HepG2 (cell line): ENCODE measurements at regions of chr6 and their contacts with region 1.

Region 1: DNA sequence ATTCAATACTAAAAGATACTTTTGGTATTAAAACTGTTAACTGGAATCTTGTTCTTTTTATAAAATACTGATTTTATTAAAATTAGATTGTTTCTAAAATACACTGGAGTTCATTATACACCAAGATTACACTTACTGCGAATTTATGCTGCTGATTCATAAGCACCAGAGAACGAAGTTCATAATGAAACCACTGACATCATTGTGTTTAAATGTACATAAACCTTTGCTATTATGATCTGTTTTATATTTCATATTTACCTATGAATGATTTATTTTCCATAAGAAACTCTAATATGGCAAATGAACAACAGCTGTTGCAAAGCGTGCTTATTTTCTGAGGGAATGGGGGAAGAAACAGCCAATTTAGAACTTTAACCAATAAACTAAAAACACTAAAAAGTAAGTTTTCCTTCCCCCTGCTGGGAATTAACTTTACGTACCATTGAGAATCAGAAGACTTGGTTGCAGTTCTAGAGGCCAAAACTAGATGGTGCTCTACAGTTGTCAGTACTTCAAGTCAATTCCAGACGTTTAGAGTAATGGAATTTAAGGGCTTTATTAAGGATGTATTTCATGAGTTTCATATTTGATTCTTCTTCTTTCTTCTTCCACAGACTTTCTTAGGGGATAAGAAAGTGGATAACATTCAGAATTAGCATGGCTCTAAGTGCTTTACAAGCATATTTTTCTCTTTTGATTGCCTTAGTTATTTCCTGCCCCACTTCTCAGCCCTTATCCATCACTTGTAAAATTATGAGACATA is 30.8 kb upstream of the COL19A1 start:
- DNase-seq: peak; percentile 41
- ATAC-seq: peak; percentile 75
- H3K4me3 ChIP-seq: no peak overlapping the region
- H3K27ac ChIP-seq: no peak overlapping the region
- H3K4me1 ChIP-seq: no peaks in the 10 kb centered on the region
- H3K27me3 ChIP-seq: no peaks in the 10 kb centered on the region
- CTCF ChIP-seq: peak; percentile 60
- EP300 ChIP-seq: no peak
- POLR2A ChIP-seq: no peak
- RAD21 ChIP-seq: no peak

Region 2: DNA sequence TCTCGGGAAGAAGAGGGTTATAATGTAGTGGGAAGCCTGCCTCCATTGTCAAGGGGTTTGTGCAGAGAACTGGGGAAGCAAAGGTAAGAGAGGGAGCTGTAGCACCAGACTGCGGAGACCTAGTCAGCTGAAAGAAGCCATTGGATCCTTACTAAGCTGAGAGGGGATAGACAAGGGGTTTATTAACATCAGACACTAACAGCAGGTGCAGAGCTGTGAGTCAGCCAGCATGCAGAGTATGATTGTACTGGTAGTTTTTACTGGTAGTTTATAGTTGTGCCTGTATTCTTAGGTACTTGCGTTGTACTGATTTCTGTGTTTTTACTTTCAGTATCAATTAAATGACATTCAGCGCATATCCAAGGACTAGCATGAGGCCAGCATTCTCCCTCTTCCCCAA is 13.0 kb after region 1 on chr6:
- CTCF ChIA-PET with region 1: no interaction called
- POLR2A ChIA-PET with region 1: no interaction called
- in situ Hi-C with region 1: no loop called
- intact Hi-C with region 1: no loop called
- DNase-seq: no peak
- ATAC-seq: no peak
- H3K4me3 ChIP-seq: no peak overlapping the region
- H3K27ac ChIP-seq: no peak overlapping the region
- H3K4me1 ChIP-seq: no peaks in the 10 kb centered on the region
- H3K27me3 ChIP-seq: no peaks in the 10 kb centered on the region
- CTCF ChIP-seq: no peak
- EP300 ChIP-seq: no peak
- POLR2A ChIP-seq: no peak
- RAD21 ChIP-seq: no peak

Region 3: DNA sequence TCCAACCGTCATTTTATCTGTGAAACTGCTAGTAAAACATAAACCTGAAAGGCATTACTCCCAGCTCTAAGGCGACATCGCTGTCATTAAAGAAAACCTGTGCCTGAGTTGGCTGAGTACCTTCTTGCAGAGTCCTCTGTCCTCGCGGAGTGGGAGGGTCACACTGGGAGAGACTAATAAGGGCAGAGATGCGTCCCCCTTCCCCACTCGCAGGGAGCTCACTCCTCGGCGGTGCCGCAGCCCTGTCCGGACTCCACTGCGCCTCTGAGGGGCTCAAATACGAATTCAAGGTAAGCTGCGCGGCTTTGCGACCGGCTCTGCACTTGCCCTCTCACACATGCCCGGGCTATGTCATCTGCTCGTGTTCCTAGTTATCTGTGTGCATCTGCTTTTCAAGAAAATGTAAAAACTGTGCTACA is 30.8 kb after region 1 on chr6 and contains the start of gene COL19A1:
- CTCF ChIA-PET with region 1: no interaction called
- POLR2A ChIA-PET with region 1: no interaction called
- in situ Hi-C with region 1: no loop called
- intact Hi-C with region 1: no loop called
- DNase-seq: no peak
- ATAC-seq: peak; percentile 64
- H3K4me3 ChIP-seq: peak within 1 kb of the TSS; percentile 50 to 68 (median 50)
- H3K27ac ChIP-seq: no peak within 1 kb of the TSS
- H3K4me1 ChIP-seq: peaks cover 16% of the 10 kb centered on the region
- H3K27me3 ChIP-seq: peaks cover 2 to 34% of the 10 kb centered on the region in 2 experiments; a peak in 4 of 5 replicates
- CTCF ChIP-seq: no peak
- EP300 ChIP-seq: no peak
- POLR2A ChIP-seq: no peak
- RAD21 ChIP-seq: no peak
- total RNA-seq, gene COL19A1: not detected in 2 replicates

Region 4: DNA sequence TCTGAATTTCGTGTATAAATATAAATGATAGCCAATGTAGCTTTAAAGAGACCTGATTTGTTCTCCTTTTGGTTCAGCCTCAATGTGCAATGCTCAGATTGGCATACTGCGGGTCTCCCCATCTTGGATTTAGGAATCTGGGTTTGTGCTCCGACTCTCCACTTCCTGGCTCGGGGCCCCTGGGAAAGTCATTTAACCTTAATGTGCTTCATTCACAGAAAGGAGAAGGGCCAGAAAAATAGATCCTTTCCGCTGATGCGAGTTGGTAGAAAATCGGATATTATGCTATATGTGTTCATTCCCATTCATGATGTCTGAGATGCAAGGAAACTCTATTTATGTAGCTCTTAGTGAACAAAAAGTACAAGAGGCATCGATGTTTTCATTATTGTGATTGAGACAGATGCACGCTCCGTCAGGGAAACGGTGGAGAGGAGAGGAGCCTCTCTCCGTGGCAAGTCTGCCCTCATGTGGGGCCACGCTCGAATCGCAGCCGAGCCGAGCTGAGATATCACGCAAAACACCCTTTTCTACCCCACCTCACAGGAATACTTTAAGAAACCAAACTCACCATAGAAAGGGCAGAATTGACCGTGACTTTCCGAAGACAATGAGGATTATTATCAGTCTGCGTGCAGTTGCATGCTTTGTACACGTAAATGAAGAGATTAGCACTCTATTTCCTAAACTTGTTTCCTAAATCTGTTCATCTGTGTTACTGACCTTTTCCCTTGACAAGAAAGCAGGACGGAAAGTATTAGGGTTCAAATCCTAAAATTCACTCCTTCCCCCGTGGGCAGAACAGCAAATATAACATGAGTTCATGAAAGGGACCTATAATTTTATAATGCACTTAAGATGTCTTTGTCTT is 330.7 kb after region 1 on chr6:
- CTCF ChIA-PET with region 1: no interaction called
- POLR2A ChIA-PET with region 1: no interaction called
- in situ Hi-C with region 1: no loop called
- intact Hi-C with region 1: loop called (anchors 10 kb)
- DNase-seq: peak; percentile 8
- ATAC-seq: peak; percentile 98
- H3K4me3 ChIP-seq: no peak overlapping the region
- H3K27ac ChIP-seq: no peak overlapping the region
- H3K4me1 ChIP-seq: 0 out of 2 replicates have a peak, but pooled peaks cover 5% of the 10 kb centered on the region
- H3K27me3 ChIP-seq: no peaks in the 10 kb centered on the region
- CTCF ChIP-seq: peak; percentile 81
- EP300 ChIP-seq: no peak
- POLR2A ChIP-seq: no peak
- RAD21 ChIP-seq: peak; percentile 41; the same call in 1 of the 2 replicates